ENCODE measurements at regions of chr5 and their contacts with region 1.

Region 1: GRCh38 chr5:10627160-10627701 is 63.4 kb downstream of the ANKRD33B start:
- DNase-seq: no peak
- H3K4me3 ChIP-seq: peak overlapping the region; percentile 44
- H3K27ac ChIP-seq: peak overlapping the region; percentile 65
- H3K4me1 ChIP-seq: peaks cover 43% of the 10 kb centered on the region
- H3K27me3 ChIP-seq: no peaks in the 10 kb centered on the region
- CTCF ChIP-seq: no peak

Region 2: DNA sequence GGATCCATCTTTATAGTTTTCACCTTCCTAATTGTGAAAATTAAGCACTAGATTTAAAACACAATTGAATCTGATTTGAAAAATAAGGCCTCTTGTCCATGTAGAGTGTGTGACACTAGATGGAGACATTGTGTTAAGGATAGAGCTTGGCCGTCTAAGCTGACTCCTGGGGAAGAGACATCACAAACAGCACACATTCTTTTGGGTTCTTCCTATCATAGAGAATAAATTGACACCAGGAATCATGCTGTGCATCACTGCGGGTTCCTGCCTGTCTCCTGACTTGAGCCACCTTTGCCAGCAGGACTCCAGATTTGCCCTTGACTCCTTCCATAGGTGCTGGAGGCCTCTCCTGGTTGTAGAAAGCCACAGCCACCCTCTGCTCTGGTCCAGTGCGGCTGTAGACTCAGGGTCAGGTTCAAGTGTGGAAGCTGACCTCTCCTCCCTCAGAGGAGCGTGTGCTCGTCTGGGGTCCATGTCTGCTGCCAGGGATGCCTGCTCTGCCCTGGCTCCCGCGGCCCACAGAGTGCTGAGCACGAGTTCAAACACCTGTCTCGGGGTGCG is 174.4 kb before region 1 on chr5:
- intact Hi-C with region 1: loop called (anchors 5 kb)
- DNase-seq: no peak
- H3K4me3 ChIP-seq: no peak overlapping the region
- H3K27ac ChIP-seq: no peak overlapping the region
- H3K4me1 ChIP-seq: peaks cover 31% of the 10 kb centered on the region
- H3K27me3 ChIP-seq: no peaks in the 10 kb centered on the region
- CTCF ChIP-seq: peak; percentile 82

Region 3: GRCh38 chr5:10552183-10553143 is 74.8 kb before region 1 on chr5:
- intact Hi-C with region 1: loop called (anchors 10 kb)
- DNase-seq: no peak
- H3K4me3 ChIP-seq: no peak overlapping the region
- H3K27ac ChIP-seq: peak overlapping the region; percentile 66
- H3K4me1 ChIP-seq: peaks cover 37% of the 10 kb centered on the region
- H3K27me3 ChIP-seq: no peaks in the 10 kb centered on the region
- CTCF ChIP-seq: no peak

Measured in left ventricle myocardium inferior (tissue), 1 donor.